ENCODE measurements at regions of chr3 and their contacts with region 1.

Region 1: GRCh38 chr3:167861649-167862048 is 126.1 kb downstream of the SERPINI1 start:
- DNase-seq: no peak
- H3K4me3 ChIP-seq: no peak overlapping the region
- H3K27ac ChIP-seq: no peak overlapping the region
- H3K4me1 ChIP-seq: peaks cover 0 to 10% (median 0%) of the 10 kb centered on the region in 4 donors
- H3K27me3 ChIP-seq: no peaks in the 10 kb centered on the region
- CTCF ChIP-seq: no peak
- EP300 ChIP-seq: no peak
- POLR2A ChIP-seq: no peak

Region 2: DNA sequence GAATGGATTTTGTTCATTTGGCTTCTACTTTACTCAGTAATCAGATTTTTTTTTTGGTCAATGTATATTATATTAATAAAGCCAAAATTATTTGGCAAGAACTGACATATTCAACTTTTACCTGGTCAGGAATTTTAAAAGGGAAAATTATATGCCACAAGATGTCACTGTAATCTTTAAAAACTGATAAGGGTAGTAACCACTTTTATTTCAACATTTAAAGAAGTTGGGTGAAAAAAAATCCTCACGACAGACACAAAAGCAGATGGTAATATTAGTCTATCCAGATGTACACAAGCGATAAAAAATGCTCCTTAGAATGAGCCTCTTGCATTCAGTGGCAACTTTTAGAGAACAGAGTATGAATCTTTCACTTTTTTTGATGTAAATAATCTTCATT is 24.2 kb before region 1 on chr3:
- intact Hi-C with region 1: loop called (anchors 2 kb)
- DNase-seq: no peak
- H3K4me3 ChIP-seq: no peak overlapping the region
- H3K27ac ChIP-seq: no peak overlapping the region
- H3K4me1 ChIP-seq: no peaks in the 10 kb centered on the region
- H3K27me3 ChIP-seq: no peaks in the 10 kb centered on the region
- CTCF ChIP-seq: no peak
- EP300 ChIP-seq: no peak
- POLR2A ChIP-seq: no peak

Region 3: DNA sequence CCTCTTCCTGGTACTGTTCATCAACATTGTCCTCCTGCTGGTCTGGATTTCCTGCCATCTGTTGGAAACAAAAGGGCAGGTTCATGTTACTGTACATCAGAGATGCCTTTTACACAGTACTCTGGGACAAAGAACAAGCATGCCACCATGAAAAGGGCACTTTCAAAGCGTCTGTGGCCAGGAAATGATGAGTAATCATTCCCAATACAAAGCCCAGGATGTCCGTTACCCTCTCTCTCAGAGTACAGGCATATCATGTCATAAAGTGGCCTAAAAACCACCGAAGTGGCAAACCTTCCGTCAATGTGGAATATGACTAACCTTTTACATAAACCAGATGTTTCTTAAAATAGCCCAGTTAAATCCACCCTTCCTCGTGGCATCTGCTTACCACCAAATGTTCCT is 162.9 kb after region 1 on chr3:
- intact Hi-C with region 1: no loop called
- DNase-seq: peak in 1 of 2 donors; percentile 23
- H3K4me3 ChIP-seq: no peak overlapping the region
- H3K27ac ChIP-seq: peak overlapping the region in 2 of 5 donors; percentile 54 to 65
- H3K4me1 ChIP-seq: peaks cover 0 to 37% (median 15%) of the 10 kb centered on the region in 4 donors
- H3K27me3 ChIP-seq: no peaks in the 10 kb centered on the region
- CTCF ChIP-seq: no peak
- EP300 ChIP-seq: no peak
- POLR2A ChIP-seq: no peak

Measured in stomach (tissue), 19 donors.